ENCODE measurements at regions of chr11 and their contacts with region 1.

Region 1: DNA sequence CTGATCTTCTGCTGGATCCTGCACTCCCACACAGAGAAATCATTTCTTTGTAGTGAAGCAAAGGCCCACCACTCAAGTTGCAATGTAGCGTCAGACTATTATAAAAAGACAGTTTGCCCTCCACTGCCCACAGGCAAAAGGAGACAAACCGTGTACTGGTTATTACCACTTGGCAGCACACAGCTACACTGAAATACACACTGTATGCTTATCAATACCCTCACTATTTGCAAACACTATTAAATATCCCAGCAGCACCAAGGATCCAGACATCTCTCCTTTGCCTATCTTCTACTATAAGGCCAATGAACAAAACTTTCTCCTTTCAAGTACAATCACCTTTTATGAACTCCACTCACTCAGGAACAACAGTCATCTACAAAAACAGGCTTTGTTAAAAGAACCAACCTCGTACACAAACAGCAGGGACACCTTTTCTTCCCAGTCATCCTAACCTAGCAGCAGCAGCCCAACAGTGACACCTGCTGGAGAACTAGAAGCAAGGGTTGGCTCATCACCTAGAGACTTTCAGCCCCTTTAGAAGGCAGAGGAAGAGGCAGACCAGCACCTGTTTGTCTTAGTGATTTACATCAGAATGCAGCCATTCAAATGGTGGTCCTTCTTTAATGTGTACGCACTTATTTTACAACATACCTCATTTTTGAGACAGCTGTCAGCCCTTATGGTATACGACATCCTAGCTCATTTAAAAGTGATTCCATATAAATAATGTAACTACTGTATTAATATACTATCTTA is 56.1 kb downstream of the AMBRA1 start:
- DNase-seq: peak in 1 of 2 donors; percentile 69
- H3K4me3 ChIP-seq: no peak overlapping the region
- H3K27ac ChIP-seq: no peak overlapping the region
- H3K4me1 ChIP-seq: no peaks in the 10 kb centered on the region
- H3K27me3 ChIP-seq: no peaks in the 10 kb centered on the region
- CTCF ChIP-seq: peak; percentile 42 to 85 (median 81)

Region 2: GRCh38 chr11:45900916-45901617 is 636.6 kb before region 1 on chr11:
- intact Hi-C with region 1: no loop called
- DNase-seq: no peak
- H3K4me3 ChIP-seq: peak overlapping the region; percentile 70 to 74
- H3K27ac ChIP-seq: peak overlapping the region; percentile 13 to 43
- H3K4me1 ChIP-seq: peaks cover 0 to 20% of the 10 kb centered on the region in 2 donors
- H3K27me3 ChIP-seq: no peaks in the 10 kb centered on the region
- CTCF ChIP-seq: no peak

Region 3: GRCh38 chr11:46346886-46347636 is 190.7 kb before region 1 on chr11 and contains the start of gene DGKZ:
- intact Hi-C with region 1: loop called (anchors 5 kb)
- DNase-seq: peak; percentile 47 to 92
- H3K4me3 ChIP-seq: peak within 1 kb of the TSS; percentile 73 to 96
- H3K27ac ChIP-seq: peak within 1 kb of the TSS in 1 of 2 donors; percentile 37
- H3K4me1 ChIP-seq: peaks cover 9 to 14% of the 10 kb centered on the region in 2 donors
- H3K27me3 ChIP-seq: no peaks in the 10 kb centered on the region
- CTCF ChIP-seq: peak; percentile 43 to 100 (median 59)
- total RNA-seq, gene DGKZ: 123 TPM

Region 4: DNA sequence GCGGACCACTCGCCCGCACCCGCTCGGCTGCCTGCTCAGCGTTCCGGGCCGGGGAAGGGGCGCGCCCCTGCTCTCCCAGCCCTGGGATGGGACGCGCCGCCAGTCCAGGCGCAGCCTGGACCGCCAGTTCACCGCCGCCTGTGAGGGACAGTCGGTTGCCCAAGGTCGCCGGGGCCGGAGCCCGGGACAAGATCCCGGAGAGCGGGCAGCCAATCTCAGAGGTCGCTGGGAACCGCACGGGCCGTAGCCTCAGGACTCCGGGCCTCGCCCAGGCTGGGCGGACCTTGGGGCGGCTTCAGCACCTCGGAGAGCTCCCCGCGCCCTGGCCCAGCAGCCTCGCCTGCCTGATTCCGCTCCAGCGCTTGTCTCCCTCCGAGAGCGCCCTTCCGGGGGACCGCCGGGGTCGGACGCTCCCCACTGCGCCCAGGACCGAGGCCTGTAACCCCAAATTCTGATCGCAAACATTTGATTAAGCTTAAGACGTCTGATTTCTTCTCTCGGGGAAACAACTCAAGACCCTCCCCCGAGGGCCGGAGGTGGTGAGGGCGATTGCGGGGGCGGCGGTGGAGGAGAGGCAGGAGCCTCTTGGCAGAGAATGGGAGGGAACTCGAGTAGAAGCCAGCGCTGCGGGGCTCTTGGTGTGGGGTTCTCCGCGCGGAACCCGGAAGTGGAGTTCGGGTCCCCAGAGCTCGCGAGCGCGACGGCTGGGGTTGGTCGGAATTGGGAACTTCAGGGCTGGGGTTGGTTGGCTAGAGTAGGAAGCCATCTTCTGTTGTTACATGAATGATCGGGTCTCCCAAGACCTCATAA is 145.1 kb before region 1 on chr11:
- intact Hi-C with region 1: loop called (anchors 5 kb)
- DNase-seq: peak in 1 of 2 donors; percentile 84
- H3K4me3 ChIP-seq: peak overlapping the region; percentile 48 to 50
- H3K27ac ChIP-seq: no peak overlapping the region
- H3K4me1 ChIP-seq: peaks cover 14 to 21% of the 10 kb centered on the region in 2 donors
- H3K27me3 ChIP-seq: peaks cover 16% of the 10 kb centered on the region
- CTCF ChIP-seq: no peak

Region 5: GRCh38 chr11:46485856-46486443 is 51.8 kb before region 1 on chr11:
- intact Hi-C with region 1: no loop called
- DNase-seq: no peak
- H3K4me3 ChIP-seq: no peak overlapping the region
- H3K27ac ChIP-seq: no peak overlapping the region
- H3K4me1 ChIP-seq: no peaks in the 10 kb centered on the region
- H3K27me3 ChIP-seq: no peaks in the 10 kb centered on the region
- CTCF ChIP-seq: no peak

Region 6: DNA sequence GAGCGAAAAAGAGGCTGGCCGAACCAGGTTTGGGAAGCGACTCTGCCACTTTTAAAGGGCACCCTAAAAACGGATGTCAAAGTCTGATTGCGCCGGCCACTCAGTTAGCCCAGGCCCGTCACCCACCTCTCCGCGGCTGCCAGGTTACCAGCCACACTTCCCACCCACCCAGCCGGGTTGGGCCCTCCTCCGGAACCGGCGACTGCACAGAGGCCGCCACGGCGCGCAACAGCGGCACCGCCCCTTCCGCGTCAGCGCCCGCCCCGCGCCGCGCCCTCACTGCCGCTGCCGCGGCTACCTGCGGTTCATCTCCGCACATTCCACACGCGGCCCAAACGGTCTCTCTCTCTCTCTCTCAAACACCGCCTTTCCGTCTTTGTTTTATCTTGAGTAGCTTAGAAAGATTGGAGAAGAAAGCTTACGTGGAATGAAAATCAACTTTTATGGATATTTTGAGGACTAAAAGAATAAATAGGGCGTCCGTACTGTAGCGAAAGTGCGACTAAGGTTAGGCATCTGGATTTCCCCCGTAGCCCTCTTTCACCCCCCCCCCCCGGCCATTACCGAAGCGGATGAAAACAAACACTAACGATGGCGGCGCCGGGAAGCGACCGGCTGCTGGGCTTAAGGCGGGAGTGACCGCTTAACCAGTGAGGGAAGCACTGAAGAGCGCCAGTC is 79.4 kb after region 1 on chr11 and contains the starts of genes ATG13 and HARBI1:
- intact Hi-C with region 1: no loop called
- DNase-seq: peak; percentile 36 to 94
- H3K4me3 ChIP-seq: peak within 1 kb of the TSS; percentile 96 to 100
- H3K27ac ChIP-seq: peak within 1 kb of the TSS; percentile 98 to 99
- H3K4me1 ChIP-seq: peaks cover 3 to 19% of the 10 kb centered on the region in 2 donors
- H3K27me3 ChIP-seq: no peaks in the 10 kb centered on the region
- CTCF ChIP-seq: no peak
- total RNA-seq, gene ATG13: 208 TPM
- total RNA-seq, gene HARBI1: not detected